Mammary epithelial cell (primary cell): ENCODE measurements at regions of chr19 and their contacts with region 1.

Region 1: DNA sequence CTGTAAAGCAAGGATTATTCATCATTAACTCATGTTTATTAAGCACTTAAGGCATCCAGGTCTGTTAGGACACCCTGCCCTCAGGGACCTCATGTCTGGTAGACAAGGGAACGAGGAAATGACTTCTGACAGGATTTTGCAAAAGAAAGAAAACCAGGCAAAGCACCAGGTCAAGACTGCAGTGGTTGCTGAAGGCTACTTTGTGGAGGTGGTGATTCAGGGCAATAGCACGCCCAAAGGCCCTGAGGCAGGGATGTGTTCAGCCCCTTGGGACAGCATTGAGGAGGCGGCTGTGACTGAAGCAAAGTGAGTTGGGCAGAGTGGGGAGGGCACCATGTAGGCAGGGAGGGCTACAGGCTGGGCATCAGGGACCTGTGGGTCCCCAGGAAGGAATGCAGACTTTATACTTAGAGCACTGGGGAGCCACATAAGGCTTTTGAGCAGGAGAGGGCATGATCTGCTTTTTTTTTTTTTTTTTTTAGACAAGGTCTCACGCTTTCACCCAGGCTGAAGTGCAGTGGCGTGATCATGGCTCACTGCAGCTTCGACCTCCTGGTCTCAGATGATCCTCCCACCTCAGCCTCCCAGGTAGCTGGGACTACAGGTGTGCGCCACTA is 10.8 kb upstream of the HOMER3 start:
- DNase-seq: peak; percentile 96
- H3K4me3 ChIP-seq: no peak overlapping the region
- H3K27ac ChIP-seq: no peak overlapping the region
- H3K4me1 ChIP-seq: peaks cover 24% of the 10 kb centered on the region
- H3K27me3 ChIP-seq: no peaks in the 10 kb centered on the region
- CTCF ChIP-seq: no peak

Region 2: DNA sequence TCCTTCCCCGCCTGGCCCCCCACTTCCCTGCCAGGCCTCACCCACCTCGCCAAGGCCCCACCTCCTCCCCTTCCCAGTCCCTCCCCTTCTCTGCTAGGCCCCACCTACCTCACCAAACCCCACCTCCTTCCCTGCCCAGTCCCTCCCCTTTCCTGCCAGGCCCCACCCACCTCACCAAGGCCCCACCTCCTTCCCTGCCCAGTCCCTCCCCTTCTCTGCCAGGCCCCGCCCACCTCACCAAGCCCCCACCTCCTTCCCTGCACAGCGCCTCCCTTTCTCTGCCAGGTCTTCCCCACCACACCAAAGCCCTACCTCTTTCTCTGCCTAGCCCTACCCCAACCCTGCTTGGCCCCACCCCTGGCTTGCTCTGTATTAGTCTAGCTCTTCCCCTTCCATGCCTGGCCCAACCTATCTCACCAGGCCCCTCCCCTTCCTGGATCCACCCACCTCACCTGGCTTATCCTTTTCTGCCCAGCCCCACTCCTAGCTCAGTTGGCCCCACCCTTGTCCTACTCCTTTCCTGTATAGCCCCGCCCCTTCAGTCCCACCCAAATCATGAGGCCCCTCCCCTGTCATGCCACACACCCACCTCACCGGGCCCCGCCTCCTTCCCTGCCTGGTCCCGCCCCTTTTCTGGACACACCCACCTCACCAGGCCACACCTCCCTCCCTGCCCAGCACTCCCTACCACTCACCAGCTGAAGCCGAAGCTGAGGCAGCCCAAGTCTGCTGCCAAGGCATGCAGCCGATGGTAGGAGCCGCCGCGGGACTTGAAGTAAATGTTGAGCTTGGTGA is 72.0 kb before region 1 on chr19:
- CTCF ChIA-PET with region 1: no interaction called
- dilution Hi-C with region 1: loop called (anchors 5 kb)
- in situ Hi-C with region 1: no loop called
- intact Hi-C with region 1: no loop called
- DNase-seq: peak; percentile 30
- H3K4me3 ChIP-seq: no peak overlapping the region
- H3K27ac ChIP-seq: no peak overlapping the region
- H3K4me1 ChIP-seq: no peaks in the 10 kb centered on the region
- H3K27me3 ChIP-seq: no peaks in the 10 kb centered on the region
- CTCF ChIP-seq: no peak

Region 3: DNA sequence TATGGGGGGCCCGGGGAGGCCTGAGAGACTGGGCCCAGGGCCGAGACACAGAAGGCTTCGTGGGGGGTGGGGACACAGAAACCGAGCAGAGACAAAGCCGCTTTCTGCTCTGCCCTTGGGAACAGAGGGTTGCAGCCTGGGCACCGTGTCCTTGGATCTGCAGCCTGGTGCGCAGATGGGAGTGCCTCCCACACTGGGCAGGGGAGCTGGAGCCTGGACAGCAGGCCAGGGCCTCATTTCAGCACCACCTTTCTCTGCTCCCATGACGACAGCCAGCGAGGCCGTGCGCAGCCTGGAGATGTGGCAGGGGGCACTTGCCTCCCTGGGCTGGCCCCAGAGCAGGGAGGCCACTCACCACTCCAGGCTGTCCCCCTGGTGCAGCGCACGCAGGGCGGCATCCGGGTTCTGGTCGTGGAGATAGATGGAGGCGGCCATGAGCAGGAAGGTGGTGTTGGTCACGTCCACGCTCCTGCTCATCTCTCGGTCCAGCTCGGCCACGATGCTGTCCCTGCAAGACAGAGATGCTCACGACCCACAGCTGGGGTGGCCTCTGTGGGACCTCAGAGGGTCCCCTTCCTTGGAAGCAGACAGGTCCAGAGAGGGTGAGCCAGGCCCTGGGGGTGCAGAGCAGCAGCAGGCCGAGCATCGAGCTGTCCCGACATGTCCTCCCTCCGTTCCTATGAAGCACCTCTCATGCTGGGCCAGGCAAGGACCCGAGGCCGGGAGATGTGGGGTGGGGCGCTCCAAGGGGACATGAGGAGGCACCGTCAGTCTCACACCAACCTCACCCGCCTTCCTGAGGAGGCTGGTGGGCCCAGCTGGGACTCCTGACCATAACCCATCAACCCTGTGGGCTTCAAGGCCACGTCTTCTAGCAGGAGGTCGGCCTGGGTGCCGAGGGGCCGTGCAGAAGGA is 44.9 kb before region 1 on chr19:
- CTCF ChIA-PET with region 1: no interaction called
- dilution Hi-C with region 1: loop called (anchors 5 kb)
- in situ Hi-C with region 1: no loop called
- intact Hi-C with region 1: no loop called
- DNase-seq: no peak
- H3K4me3 ChIP-seq: no peak overlapping the region
- H3K27ac ChIP-seq: no peak overlapping the region
- H3K4me1 ChIP-seq: no peaks in the 10 kb centered on the region
- H3K27me3 ChIP-seq: no peaks in the 10 kb centered on the region
- CTCF ChIP-seq: no peak

Region 4: DNA sequence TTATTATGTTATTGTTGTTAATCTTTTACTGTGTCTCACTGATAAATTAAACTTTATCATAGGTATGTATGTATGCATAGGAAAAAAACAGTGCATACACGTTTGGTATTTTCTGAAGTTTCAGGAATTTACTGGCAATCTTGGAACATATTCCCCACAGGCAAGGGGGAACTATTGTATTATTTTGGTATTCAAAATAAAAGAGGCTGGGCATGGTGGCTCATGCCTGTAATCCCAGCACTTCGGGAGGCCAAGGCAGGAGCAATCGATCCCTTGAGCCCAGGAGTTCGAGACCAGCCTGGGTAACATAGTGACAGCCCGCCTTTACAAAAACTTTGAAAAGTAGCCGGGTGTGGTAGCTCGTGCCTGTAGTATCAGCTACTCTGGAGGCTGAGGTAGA is 18.1 kb after region 1 on chr19:
- CTCF ChIA-PET with region 1: no interaction called
- dilution Hi-C with region 1: no loop called
- in situ Hi-C with region 1: no loop called
- intact Hi-C with region 1: loop called (anchors 1 kb)
- DNase-seq: no peak
- H3K4me3 ChIP-seq: no peak overlapping the region
- H3K27ac ChIP-seq: peak overlapping the region; percentile 81
- H3K4me1 ChIP-seq: peaks cover 14% of the 10 kb centered on the region
- H3K27me3 ChIP-seq: peaks cover 1% of the 10 kb centered on the region
- CTCF ChIP-seq: no peak

Region 5: GRCh38 chr19:19040417-19040816 is 88.6 kb after region 1 on chr19:
- CTCF ChIA-PET with region 1: no interaction called
- dilution Hi-C with region 1: loop called (anchors 5 kb)
- in situ Hi-C with region 1: no loop called
- intact Hi-C with region 1: no loop called
- DNase-seq: no peak
- H3K4me3 ChIP-seq: no peak overlapping the region
- H3K27ac ChIP-seq: no peak overlapping the region
- H3K4me1 ChIP-seq: no peaks in the 10 kb centered on the region
- H3K27me3 ChIP-seq: no peaks in the 10 kb centered on the region
- CTCF ChIP-seq: no peak

Region 6: DNA sequence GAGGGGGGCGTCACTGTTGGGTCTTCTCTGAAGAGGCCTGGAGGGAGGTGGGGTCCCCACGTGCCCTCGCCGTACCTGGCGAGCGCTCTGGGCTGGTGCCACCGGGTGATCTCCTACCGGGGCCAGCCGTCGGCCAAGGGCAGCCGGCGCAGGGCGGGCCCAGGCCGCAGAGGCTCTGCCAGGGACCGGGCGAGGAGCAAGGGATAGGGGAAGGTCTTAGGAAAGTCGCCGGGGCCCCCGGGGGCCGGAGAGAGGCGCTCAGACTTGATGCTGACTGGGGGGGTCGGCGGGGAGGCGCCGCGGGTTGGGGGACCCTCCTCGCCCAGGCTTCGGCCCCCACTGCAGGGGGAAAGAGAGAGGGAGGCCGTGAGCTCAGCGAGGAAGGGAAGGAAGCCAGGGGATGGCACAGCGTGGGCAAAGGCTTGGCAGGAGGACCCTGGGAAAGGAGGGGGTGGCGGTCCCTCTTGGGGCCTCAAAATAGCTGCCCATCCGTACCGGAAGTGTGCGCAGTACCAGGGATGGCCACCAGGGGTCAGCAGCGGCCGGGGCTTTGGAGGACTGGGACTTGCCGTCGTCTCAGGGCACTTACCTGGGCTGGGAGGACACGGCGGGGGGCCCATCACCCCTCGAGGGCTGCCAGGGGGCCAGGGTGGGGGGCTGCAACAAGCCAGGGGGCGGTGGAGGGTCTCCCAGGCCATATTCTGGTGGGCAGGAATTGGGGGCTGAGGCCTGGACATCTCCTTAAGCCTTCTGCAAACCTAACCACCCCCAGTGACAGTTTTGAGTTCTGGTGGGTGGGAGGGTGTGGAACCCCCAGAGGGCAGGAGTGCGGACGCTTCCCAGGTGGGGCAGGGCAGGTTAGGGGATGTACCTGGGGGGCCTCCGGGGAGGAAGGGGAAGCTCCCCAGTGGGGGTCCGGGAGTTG is 194.2 kb after region 1 on chr19:
- CTCF ChIA-PET with region 1: no interaction called
- dilution Hi-C with region 1: no loop called
- in situ Hi-C with region 1: no loop called
- intact Hi-C with region 1: no loop called
- DNase-seq: peak; percentile 42
- H3K4me3 ChIP-seq: peak overlapping the region in 2 of 3 experiments; percentile 20 to 29
- H3K27ac ChIP-seq: no peak overlapping the region
- H3K4me1 ChIP-seq: peaks cover 2% of the 10 kb centered on the region
- H3K27me3 ChIP-seq: no peaks in the 10 kb centered on the region
- CTCF ChIP-seq: peak; percentile 92 to 96